Activated CD8-positive, alpha-beta T cell treated with anti-CD3 and anti-CD28 coated beads, Interleukin-2, amount 10 ng/mL, durations not matched to agents 7 days and 5 days (primary cell): ENCODE measurements at regions of chr11 and their contacts with region 1.

Region 1: GRCh38 chr11:326842-327580 is 6.4 kb upstream of the IFITM3 start:
- DNase-seq: peak; percentile 85
- ATAC-seq: peak; percentile 63
- H3K4me3 Mint-ChIP-seq: peak overlapping the region; percentile 74
- H3K27ac Mint-ChIP-seq: peak overlapping the region; percentile 98
- H3K4me1 Mint-ChIP-seq: peaks cover 83% of the 10 kb centered on the region
- H3K27me3 Mint-ChIP-seq: no peaks in the 10 kb centered on the region

Region 2: GRCh38 chr11:225734-226453 is 101.1 kb before region 1 on chr11:
- CTCF ChIA-PET with region 1: no interaction called
- POLR2A ChIA-PET with region 1: no interaction called
- DNase-seq: no peak
- ATAC-seq: no peak
- H3K4me3 Mint-ChIP-seq: no peak overlapping the region
- H3K27ac Mint-ChIP-seq: peak overlapping the region; percentile 50
- H3K4me1 Mint-ChIP-seq: peaks cover 9% of the 10 kb centered on the region
- H3K27me3 Mint-ChIP-seq: no peaks in the 10 kb centered on the region

Region 3: GRCh38 chr11:340539-341512 is 13.8 kb after region 1 on chr11:
- CTCF ChIA-PET with region 1: interaction called, 14 read pairs
- POLR2A ChIA-PET with region 1: interaction called, 6 read pairs
- DNase-seq: no peak
- ATAC-seq: no peak
- H3K4me3 Mint-ChIP-seq: no peak overlapping the region
- H3K27ac Mint-ChIP-seq: no peak overlapping the region
- H3K4me1 Mint-ChIP-seq: peaks cover 32% of the 10 kb centered on the region
- H3K27me3 Mint-ChIP-seq: peaks cover 2% of the 10 kb centered on the region

Region 4: DNA sequence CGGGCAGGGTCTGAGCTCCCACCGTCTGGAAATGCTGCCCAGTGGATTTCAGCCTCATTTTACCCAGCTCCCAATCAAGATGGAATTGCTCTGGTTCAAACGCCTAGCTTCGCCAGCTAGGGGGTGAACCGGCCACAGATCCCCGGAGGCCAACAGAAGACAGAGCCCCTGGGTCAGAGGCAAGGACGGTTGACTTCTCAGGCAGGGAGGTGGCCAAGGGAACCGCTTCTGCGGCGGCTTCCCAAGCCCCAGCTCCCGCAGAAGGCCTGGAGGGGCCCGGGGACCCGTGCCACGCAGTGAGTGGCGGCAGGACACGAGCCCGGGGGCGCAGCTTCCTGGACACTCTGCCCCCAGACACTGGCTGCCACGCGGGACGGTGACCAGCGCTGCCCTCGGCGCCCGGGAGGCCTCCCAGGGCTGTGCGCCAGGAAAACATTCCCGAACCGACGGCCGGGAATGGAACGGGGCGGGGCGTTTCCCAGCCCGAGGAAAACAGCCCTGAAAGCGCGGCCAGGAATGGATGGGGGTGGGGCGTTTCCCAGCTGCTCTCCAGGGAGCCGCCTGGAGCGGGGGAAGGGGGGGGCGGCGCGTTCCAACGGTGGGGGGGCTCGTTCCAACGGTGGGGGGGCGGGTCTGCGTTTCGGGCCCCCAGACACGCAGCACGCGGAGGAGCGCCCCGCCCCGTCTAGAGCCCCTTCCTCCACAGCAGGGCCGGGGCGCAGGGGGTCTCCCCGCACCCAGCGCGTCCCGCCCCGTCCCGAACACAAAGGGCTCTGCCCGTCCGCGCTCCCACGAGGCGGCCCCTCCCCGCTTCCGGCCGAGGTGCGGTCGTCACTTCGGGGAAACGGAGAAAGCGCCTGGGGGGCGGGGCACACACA is 28.8 kb after region 1 on chr11:
- CTCF ChIA-PET with region 1: interaction called, 16 read pairs
- POLR2A ChIA-PET with region 1: interaction called, 22 read pairs
- DNase-seq: peak; percentile 92
- ATAC-seq: peak; percentile 61
- H3K4me3 Mint-ChIP-seq: peak overlapping the region; percentile 84
- H3K27ac Mint-ChIP-seq: peak overlapping the region; percentile 89
- H3K4me1 Mint-ChIP-seq: peaks cover 46% of the 10 kb centered on the region
- H3K27me3 Mint-ChIP-seq: peaks cover 13% of the 10 kb centered on the region

Region 5: GRCh38 chr11:406978-407739 is 80.1 kb after region 1 on chr11:
- CTCF ChIA-PET with region 1: no interaction called
- POLR2A ChIA-PET with region 1: no interaction called
- DNase-seq: peak; percentile 96
- ATAC-seq: peak; percentile 92
- H3K4me3 Mint-ChIP-seq: no peak overlapping the region
- H3K27ac Mint-ChIP-seq: peak overlapping the region; percentile 43
- H3K4me1 Mint-ChIP-seq: peaks cover 16% of the 10 kb centered on the region
- H3K27me3 Mint-ChIP-seq: no peaks in the 10 kb centered on the region

Region 6: GRCh38 chr11:477052-477715 is 150.2 kb after region 1 on chr11:
- CTCF ChIA-PET with region 1: no interaction called
- POLR2A ChIA-PET with region 1: no interaction called
- DNase-seq: no peak
- ATAC-seq: no peak
- H3K4me3 Mint-ChIP-seq: no peak overlapping the region
- H3K27ac Mint-ChIP-seq: no peak overlapping the region
- H3K4me1 Mint-ChIP-seq: no peaks in the 10 kb centered on the region
- H3K27me3 Mint-ChIP-seq: no peaks in the 10 kb centered on the region